ENCODE measurements at regions of chr6 and their contacts with region 1.

Region 1: GRCh38 chr6:130885392-130886192 is 58.4 kb downstream of the SMLR1 start:
- DNase-seq: peak; percentile 85
- H3K4me3 Mint-ChIP-seq: no peak overlapping the region
- H3K27ac Mint-ChIP-seq: no peak overlapping the region
- H3K4me1 Mint-ChIP-seq: no peaks in the 10 kb centered on the region
- H3K27me3 Mint-ChIP-seq: no peaks in the 10 kb centered on the region
- CTCF ChIP-seq: peak; percentile 85

Region 2: GRCh38 chr6:130900913-130901312 is 15.3 kb after region 1 on chr6:
- CTCF ChIA-PET with region 1: interaction called, 25 read pairs
- POLR2A ChIA-PET with region 1: no interaction called
- intact Hi-C with region 1: no loop called
- DNase-seq: peak; percentile 77
- H3K4me3 Mint-ChIP-seq: no peak overlapping the region
- H3K27ac Mint-ChIP-seq: no peak overlapping the region
- H3K4me1 Mint-ChIP-seq: peaks cover 19% of the 10 kb centered on the region
- H3K27me3 Mint-ChIP-seq: no peaks in the 10 kb centered on the region
- CTCF ChIP-seq: no peak

Region 3: DNA sequence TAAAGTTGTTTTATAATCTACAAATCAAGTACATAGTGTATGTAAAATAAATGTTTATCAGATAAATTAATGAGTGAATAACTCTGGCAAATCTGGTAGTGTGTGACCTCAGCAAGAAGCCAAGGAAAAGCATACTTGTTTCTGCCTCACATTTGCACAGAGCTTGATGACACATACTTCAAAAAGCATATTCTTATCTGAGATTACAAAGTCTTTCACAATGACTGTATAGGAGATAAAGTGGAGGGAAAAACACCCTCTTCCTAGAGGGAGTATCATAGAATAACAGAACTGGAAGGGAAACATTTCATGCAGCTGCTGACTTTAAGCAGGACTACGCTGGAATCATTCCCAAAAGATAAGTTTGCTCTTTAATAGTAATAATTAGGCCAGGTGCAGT is 221.6 kb after region 1 on chr6:
- CTCF ChIA-PET with region 1: interaction called, 10 read pairs
- POLR2A ChIA-PET with region 1: no interaction called
- intact Hi-C with region 1: no loop called
- DNase-seq: no peak
- H3K4me3 Mint-ChIP-seq: no peak overlapping the region
- H3K27ac Mint-ChIP-seq: no peak overlapping the region
- H3K4me1 Mint-ChIP-seq: peaks cover under 1% of the 10 kb centered on the region
- H3K27me3 Mint-ChIP-seq: no peaks in the 10 kb centered on the region
- CTCF ChIP-seq: no peak

Region 4: GRCh38 chr6:131134980-131135243 is 249.3 kb after region 1 on chr6:
- CTCF ChIA-PET with region 1: interaction called, 15 read pairs
- POLR2A ChIA-PET with region 1: no interaction called
- intact Hi-C with region 1: no loop called
- DNase-seq: no peak
- H3K4me3 Mint-ChIP-seq: peak overlapping the region; percentile 93
- H3K27ac Mint-ChIP-seq: peak overlapping the region; percentile 76
- H3K4me1 Mint-ChIP-seq: peaks cover 7% of the 10 kb centered on the region
- H3K27me3 Mint-ChIP-seq: no peaks in the 10 kb centered on the region
- CTCF ChIP-seq: no peak

Region 5: GRCh38 chr6:131532580-131533039 is 647.0 kb after region 1 on chr6:
- CTCF ChIA-PET with region 1: interaction called, 15 read pairs
- POLR2A ChIA-PET with region 1: no interaction called
- intact Hi-C with region 1: loop called (anchors 2 kb)
- DNase-seq: no peak
- H3K4me3 Mint-ChIP-seq: no peak overlapping the region
- H3K27ac Mint-ChIP-seq: no peak overlapping the region
- H3K4me1 Mint-ChIP-seq: no peaks in the 10 kb centered on the region
- H3K27me3 Mint-ChIP-seq: no peaks in the 10 kb centered on the region
- CTCF ChIP-seq: no peak